ENCODE measurements at regions of chr17 and their contacts with region 1.

Region 1: DNA sequence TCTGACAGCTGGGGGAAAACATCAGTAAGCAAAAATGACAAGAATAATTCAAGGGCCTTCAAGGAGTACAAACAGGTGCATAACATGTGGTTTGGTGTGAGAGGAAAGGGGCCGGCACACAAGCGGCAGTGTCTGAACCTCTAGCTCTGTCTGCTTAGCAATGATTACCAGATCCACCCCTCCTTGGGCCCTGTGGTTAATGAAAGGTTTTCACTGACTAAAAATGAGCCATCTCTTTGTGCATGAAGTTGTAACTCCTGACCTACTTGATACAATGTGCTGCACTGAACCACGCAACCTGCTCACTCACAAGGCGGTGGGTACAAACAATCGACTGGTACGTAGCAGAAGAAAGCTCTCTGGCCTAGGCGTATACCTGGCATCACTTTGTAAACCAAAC is 15.1 kb downstream of the FAM117A start:
- DNase-seq: peak; percentile 63
- H3K4me3 Mint-ChIP-seq: peak overlapping the region; percentile 73
- H3K27ac Mint-ChIP-seq: peak overlapping the region; percentile 92
- H3K4me1 Mint-ChIP-seq: peaks cover 75% of the 10 kb centered on the region
- H3K27me3 Mint-ChIP-seq: no peaks in the 10 kb centered on the region

Region 2: GRCh38 chr17:48973806-48974205 is 775.0 kb before region 1 on chr17:
- CTCF ChIA-PET with region 1: no interaction called
- POLR2A ChIA-PET with region 1: no interaction called
- DNase-seq: no peak
- H3K4me3 Mint-ChIP-seq: no peak overlapping the region
- H3K27ac Mint-ChIP-seq: no peak overlapping the region
- H3K4me1 Mint-ChIP-seq: no peaks in the 10 kb centered on the region
- H3K27me3 Mint-ChIP-seq: peaks cover 25% of the 10 kb centered on the region

Region 3: DNA sequence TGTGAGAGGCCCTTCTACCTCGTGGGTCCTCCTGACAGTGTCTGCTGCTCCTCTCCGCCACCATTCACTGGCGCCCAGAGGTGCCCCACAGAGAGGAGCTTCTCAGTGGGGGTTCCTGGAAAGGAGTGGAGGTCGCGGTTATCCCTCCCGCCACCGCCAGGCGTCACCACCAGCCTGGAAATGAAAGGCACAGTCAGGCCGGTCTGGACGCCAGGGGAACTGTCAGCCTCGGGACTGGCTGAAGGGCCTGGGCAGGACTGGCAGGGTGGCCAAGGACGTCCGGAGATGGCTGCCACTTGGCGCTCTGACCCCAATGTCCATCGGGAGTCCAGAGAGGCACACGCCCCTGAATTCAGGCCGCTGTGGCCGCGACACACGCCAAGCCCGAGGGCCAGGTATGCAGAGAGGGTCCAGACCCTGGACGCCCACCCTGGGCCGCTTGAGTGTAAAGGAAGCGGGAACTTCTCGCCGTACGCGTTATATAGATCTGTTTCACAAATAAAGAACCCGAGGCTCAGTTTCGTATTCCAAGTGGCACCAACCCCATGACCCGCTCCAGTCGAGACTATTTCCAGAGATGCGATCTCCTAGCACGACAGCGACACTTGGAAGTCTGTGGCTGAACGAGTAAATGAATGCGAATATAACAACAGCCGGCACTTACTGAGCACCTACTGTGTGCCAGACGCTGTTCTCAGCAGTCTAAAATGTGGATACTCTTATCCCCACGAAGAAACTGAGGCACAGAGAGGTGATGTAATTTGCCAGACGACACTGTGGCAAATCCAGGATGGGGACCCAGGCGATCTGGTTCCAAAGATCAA is 180.7 kb before region 1 on chr17:
- CTCF ChIA-PET with region 1: interaction called, 14 read pairs
- POLR2A ChIA-PET with region 1: no interaction called
- DNase-seq: peak; percentile 83
- H3K4me3 Mint-ChIP-seq: peak overlapping the region; percentile 37
- H3K27ac Mint-ChIP-seq: no peak overlapping the region
- H3K4me1 Mint-ChIP-seq: peaks cover 31% of the 10 kb centered on the region
- H3K27me3 Mint-ChIP-seq: peaks cover 32% of the 10 kb centered on the region

Region 4: GRCh38 chr17:49763735-49764558 is 15.2 kb after region 1 on chr17 and contains the start of gene FAM117A:
- CTCF ChIA-PET with region 1: interaction called, 50 read pairs
- POLR2A ChIA-PET with region 1: interaction called, 4 read pairs
- DNase-seq: peak; percentile 99
- H3K4me3 Mint-ChIP-seq: peak within 1 kb of the TSS; percentile 90
- H3K27ac Mint-ChIP-seq: peak within 1 kb of the TSS; percentile 90
- H3K4me1 Mint-ChIP-seq: peaks cover 48% of the 10 kb centered on the region
- H3K27me3 Mint-ChIP-seq: peaks cover 26% of the 10 kb centered on the region
- total RNA-seq, gene FAM117A: 30.6 to 34.1 TPM

Measured in activated CD4-positive, alpha-beta T cell treated with anti-CD3 and anti-CD28 coated beads, Interleukin-2, amount 10 ng/mL, durations not matched to agents 7 days and 5 days (primary cell).